ENCODE measurements at regions of chr10 and their contacts with region 1.

Region 1: GRCh38 chr10:44857363-44858016 is 53.6 kb upstream of the TMEM72 start:
- DNase-seq: no peak
- ATAC-seq: peak; percentile 86
- H3K4me3 ChIP-seq: no peak overlapping the region
- H3K27ac ChIP-seq: no peak overlapping the region
- H3K4me1 ChIP-seq: peaks cover 5% of the 10 kb centered on the region; the same call in 1 of the 2 replicates
- H3K27me3 ChIP-seq: no peaks in the 10 kb centered on the region; a peak in 2 of 4 replicates
- CTCF ChIP-seq: peak; percentile 91 to 98 (median 97)
- EP300 ChIP-seq: no peak
- POLR2A ChIP-seq: no peak
- RAD21 ChIP-seq: peak; percentile 96

Region 2: GRCh38 chr10:43671656-43672531 is 1185.6 kb before region 1 on chr10:
- CTCF ChIA-PET with region 1: interaction called, 3 read pairs
- POLR2A ChIA-PET with region 1: no interaction called
- RAD21 ChIA-PET with region 1: no interaction called
- SMC1A ChIA-PET with region 1: no interaction called
- in situ Hi-C with region 1: loop called (anchors 5 kb)
- intact Hi-C with region 1: loop called (anchors 1 kb)
- DNase-seq: no peak
- ATAC-seq: peak; percentile 92
- H3K4me3 ChIP-seq: no peak overlapping the region
- H3K27ac ChIP-seq: no peak overlapping the region
- H3K4me1 ChIP-seq: no peaks in the 10 kb centered on the region
- H3K27me3 ChIP-seq: no peaks in the 10 kb centered on the region; a peak in 3 of 4 replicates
- CTCF ChIP-seq: peak; percentile 62 to 82 (median 69); a peak in 5 of 6 replicates
- EP300 ChIP-seq: no peak
- POLR2A ChIP-seq: no peak
- RAD21 ChIP-seq: peak; percentile 92

Region 3: GRCh38 chr10:44398747-44399658 is 458.5 kb before region 1 on chr10:
- CTCF ChIA-PET with region 1: no interaction called
- POLR2A ChIA-PET with region 1: no interaction called
- RAD21 ChIA-PET with region 1: no interaction called
- SMC1A ChIA-PET with region 1: no interaction called
- in situ Hi-C with region 1: loop called (anchors 25 kb)
- intact Hi-C with region 1: loop called (anchors 10 kb)
- DNase-seq: no peak
- ATAC-seq: no peak
- H3K4me3 ChIP-seq: no peak overlapping the region
- H3K27ac ChIP-seq: no peak overlapping the region
- H3K4me1 ChIP-seq: no peaks in the 10 kb centered on the region
- H3K27me3 ChIP-seq: no peaks in the 10 kb centered on the region; a peak in 2 of 4 replicates
- CTCF ChIP-seq: no peak
- EP300 ChIP-seq: no peak
- POLR2A ChIP-seq: no peak
- RAD21 ChIP-seq: no peak

Region 4: DNA sequence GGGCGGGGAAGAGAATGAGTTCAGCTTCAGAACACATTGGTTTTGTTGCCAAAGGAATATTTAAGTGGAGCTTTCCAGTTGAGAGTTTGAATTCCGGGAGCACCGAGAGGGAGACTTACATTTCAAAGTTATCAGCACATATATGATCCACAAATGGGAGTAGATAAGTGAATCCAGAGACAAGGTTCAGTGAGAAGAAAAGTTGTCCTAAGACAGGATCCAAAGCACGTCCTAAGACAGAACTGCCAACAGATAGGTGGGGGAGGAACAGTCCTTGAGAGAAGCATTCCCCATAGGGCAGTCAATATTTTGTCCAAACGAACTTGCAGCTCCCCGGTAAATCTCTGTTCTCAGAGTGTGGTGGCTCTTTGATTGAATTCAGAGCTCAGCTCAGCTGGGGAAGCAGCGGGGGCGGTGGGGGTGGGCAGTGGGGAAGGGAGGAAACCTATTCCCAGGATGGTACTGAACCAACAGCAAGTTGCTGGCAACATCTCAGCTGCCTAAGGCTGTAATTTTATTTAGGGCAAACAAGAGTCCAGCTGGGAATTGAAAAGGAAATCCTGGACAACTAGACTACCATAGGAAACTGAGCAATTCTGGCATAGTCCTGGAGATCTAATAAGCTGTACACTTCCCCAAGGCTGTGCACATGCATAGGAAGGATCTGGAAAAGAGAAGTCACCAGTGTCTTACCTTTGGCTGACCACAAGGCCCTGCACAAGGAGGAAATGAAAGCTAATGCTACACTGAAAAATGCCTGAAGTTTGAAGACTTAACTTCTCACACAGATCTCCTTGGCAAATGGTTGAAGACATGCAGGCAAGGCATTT is 378.4 kb before region 1 on chr10:
- CTCF ChIA-PET with region 1: interaction called, 3 read pairs
- POLR2A ChIA-PET with region 1: no interaction called
- RAD21 ChIA-PET with region 1: no interaction called
- SMC1A ChIA-PET with region 1: no interaction called
- in situ Hi-C with region 1: no loop called
- intact Hi-C with region 1: loop called (anchors 10 kb)
- DNase-seq: no peak
- ATAC-seq: no peak
- H3K4me3 ChIP-seq: no peak overlapping the region
- H3K27ac ChIP-seq: no peak overlapping the region
- H3K4me1 ChIP-seq: no peaks in the 10 kb centered on the region
- H3K27me3 ChIP-seq: no peaks in the 10 kb centered on the region
- CTCF ChIP-seq: no peak
- EP300 ChIP-seq: no peak
- POLR2A ChIP-seq: no peak
- RAD21 ChIP-seq: no peak

Region 5: GRCh38 chr10:44569193-44570091 is 288.0 kb before region 1 on chr10:
- CTCF ChIA-PET with region 1: no interaction called
- POLR2A ChIA-PET with region 1: no interaction called
- RAD21 ChIA-PET with region 1: no interaction called
- SMC1A ChIA-PET with region 1: no interaction called
- in situ Hi-C with region 1: no loop called
- intact Hi-C with region 1: loop called (anchors 10 kb)
- DNase-seq: no peak
- ATAC-seq: no peak
- H3K4me3 ChIP-seq: no peak overlapping the region
- H3K27ac ChIP-seq: no peak overlapping the region
- H3K4me1 ChIP-seq: no peaks in the 10 kb centered on the region
- H3K27me3 ChIP-seq: no peaks in the 10 kb centered on the region
- CTCF ChIP-seq: no peak
- EP300 ChIP-seq: no peak
- POLR2A ChIP-seq: no peak
- RAD21 ChIP-seq: no peak

Region 6: GRCh38 chr10:44801383-44802327 is 55.8 kb before region 1 on chr10:
- CTCF ChIA-PET with region 1: no interaction called
- POLR2A ChIA-PET with region 1: no interaction called
- RAD21 ChIA-PET with region 1: no interaction called
- SMC1A ChIA-PET with region 1: no interaction called
- in situ Hi-C with region 1: no loop called
- intact Hi-C with region 1: no loop called
- DNase-seq: no peak
- ATAC-seq: no peak
- H3K4me3 ChIP-seq: no peak overlapping the region
- H3K27ac ChIP-seq: no peak overlapping the region
- H3K4me1 ChIP-seq: no peaks in the 10 kb centered on the region
- H3K27me3 ChIP-seq: peaks cover 0 to 3% of the 10 kb centered on the region in 2 experiments; a peak in 3 of 4 replicates
- CTCF ChIP-seq: no peak
- EP300 ChIP-seq: no peak
- POLR2A ChIP-seq: no peak
- RAD21 ChIP-seq: no peak

Region 7: DNA sequence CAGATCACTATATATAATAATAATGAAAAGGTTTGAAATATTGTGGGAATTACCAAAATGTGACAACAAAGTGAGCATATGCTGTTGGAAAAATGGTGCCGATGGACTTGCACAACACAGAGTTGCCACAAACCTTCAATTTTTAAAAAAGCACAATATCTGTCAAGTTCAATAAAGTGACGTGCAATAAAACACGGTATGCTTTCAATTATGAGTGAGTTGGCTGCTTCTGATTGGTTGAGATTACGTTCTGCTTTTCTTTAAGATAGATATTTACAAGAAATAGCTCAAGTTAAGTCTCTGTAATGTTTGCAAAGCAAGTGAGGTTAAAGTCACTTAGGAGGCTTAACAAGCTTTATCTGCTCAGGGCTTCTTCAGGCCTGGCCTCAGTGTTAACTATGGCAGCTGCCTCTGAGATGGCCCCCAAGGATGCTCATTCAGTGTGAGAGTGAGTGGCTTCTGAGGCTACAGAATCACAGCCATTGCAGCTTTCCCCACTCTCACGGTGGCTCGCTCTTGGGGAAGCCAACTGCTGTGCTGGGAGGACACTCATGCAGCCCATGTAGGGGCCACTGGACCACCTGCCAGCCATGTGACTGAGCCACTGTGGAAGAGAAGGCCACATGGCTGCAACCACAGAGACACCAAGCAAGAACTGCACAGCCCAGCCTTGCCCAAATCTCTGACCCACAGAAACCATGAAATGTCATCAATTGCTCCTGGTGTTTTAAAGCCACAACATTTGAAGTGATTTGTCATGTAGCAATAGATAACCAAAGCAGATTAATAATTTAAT is 24.7 kb before region 1 on chr10:
- CTCF ChIA-PET with region 1: interaction called, 3 read pairs
- POLR2A ChIA-PET with region 1: no interaction called
- RAD21 ChIA-PET with region 1: no interaction called
- SMC1A ChIA-PET with region 1: no interaction called
- in situ Hi-C with region 1: no loop called
- intact Hi-C with region 1: loop called (anchors 2 kb)
- DNase-seq: no peak
- ATAC-seq: no peak
- H3K4me3 ChIP-seq: no peak overlapping the region
- H3K27ac ChIP-seq: no peak overlapping the region
- H3K4me1 ChIP-seq: no peaks in the 10 kb centered on the region
- H3K27me3 ChIP-seq: 0 out of 4 replicates have a peak, but pooled peaks cover 0 to 2% of the 10 kb centered on the region in 2 experiments
- CTCF ChIP-seq: no peak
- EP300 ChIP-seq: no peak
- POLR2A ChIP-seq: no peak
- RAD21 ChIP-seq: no peak

Region 8: GRCh38 chr10:44882166-44882720 is 24.8 kb after region 1 on chr10:
- CTCF ChIA-PET with region 1: no interaction called
- POLR2A ChIA-PET with region 1: no interaction called
- RAD21 ChIA-PET with region 1: no interaction called
- SMC1A ChIA-PET with region 1: no interaction called
- in situ Hi-C with region 1: no loop called
- intact Hi-C with region 1: no loop called
- DNase-seq: no peak
- ATAC-seq: no peak
- H3K4me3 ChIP-seq: no peak overlapping the region
- H3K27ac ChIP-seq: no peak overlapping the region
- H3K4me1 ChIP-seq: no peaks in the 10 kb centered on the region
- H3K27me3 ChIP-seq: peaks cover 0 to 4% of the 10 kb centered on the region in 2 experiments; a peak in 3 of 4 replicates
- CTCF ChIP-seq: no peak
- EP300 ChIP-seq: no peak
- POLR2A ChIP-seq: no peak
- RAD21 ChIP-seq: no peak